ENCODE measurements at regions of chr3 and their contacts with region 1.

Region 1: GRCh38 chr3:9352917-9353752 is 9.7 kb upstream of the THUMPD3 start:
- DNase-seq: no peak
- H3K4me3 ChIP-seq: no peak overlapping the region
- H3K27ac ChIP-seq: peak overlapping the region in 1 of 4 donors; percentile 19
- H3K4me1 ChIP-seq: peaks cover 3 to 9% (median 7%) of the 10 kb centered on the region in 4 donors
- H3K27me3 ChIP-seq: no peaks in the 10 kb centered on the region
- CTCF ChIP-seq: peak; percentile 78 to 92 (median 81)
- EP300 ChIP-seq: no peak
- POLR2A ChIP-seq: no peak

Region 2: DNA sequence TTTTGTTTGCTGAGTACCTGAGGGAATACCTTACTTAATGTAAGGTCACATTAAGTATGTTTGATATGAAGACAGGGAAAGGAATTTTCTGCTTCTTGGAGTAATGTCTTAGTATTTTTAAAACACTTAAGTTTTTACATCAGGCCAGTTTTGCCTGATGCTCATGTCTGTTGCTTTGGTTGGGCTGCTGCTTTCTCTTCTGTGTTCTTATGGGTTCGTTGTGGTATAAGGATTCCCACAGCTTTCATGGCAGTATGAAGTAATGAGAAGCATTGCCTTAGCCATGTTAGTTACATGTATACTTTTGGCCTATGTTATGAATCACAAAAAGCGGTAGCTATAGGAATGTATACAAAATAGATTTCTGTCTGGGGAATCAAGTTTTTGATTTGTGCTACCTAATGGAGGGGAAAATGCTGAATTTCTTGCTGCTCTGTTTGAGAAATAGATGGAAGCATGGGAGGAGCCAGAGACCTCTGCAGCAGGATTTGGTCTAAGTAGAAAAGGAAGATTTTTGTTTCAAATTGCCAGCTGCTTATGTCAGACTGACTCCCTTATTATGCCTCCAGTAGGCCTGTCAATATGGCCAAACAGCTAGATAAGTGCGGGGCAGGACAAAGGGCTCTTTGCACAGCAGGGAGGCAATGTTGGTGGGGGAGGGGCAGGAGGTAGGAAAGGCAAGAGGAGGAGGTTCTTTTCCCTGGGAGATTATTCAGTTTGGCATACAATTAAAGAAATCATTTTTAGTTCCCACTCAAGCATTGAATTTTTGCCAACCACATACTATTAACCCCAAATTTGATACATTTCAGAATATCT is 49.5 kb after region 1 on chr3:
- intact Hi-C with region 1: no loop called
- DNase-seq: no peak
- H3K4me3 ChIP-seq: peak overlapping the region; percentile 3 to 13 (median 5)
- H3K27ac ChIP-seq: peak overlapping the region; percentile 98 to 100 (median 99)
- H3K4me1 ChIP-seq: peaks cover 78 to 89% (median 88%) of the 10 kb centered on the region in 4 donors
- H3K27me3 ChIP-seq: no peaks in the 10 kb centered on the region
- CTCF ChIP-seq: no peak
- EP300 ChIP-seq: no peak
- POLR2A ChIP-seq: no peak

Region 3: DNA sequence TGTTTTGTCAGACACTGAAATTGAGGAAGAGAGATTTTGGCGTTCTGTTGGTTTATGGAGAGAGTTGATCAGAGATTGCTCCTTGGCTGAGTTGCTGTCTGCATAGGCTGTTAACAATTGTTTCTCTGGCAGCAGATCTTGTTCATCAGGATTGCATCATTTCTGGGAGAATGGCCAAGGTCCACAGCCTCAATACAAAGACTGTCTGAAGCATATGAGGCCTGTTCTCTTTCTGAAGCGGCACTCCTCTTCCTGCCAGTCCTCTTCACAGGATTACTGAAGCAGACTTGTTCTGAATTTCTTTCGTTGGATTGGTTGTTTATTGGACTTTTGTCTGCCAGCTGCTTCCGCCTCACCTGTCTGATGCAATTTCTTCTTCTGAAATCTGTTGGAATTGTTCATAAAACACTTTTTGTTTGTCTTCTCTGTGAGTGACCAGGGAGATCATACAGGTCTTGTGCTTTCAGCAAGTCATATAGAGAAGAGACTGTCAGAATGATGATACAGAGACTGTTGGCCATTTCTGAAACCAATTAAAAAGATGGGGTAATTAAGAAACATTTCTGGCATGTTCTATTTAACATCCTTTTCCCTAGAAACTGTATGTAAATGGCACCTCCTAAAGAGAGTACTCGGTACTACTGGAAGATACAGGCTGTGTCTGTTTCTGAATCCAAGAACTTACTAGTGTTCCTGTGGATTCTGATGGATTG is 69.7 kb after region 1 on chr3:
- intact Hi-C with region 1: loop called (anchors 5 kb)
- DNase-seq: peak; percentile 93
- H3K4me3 ChIP-seq: peak overlapping the region in 3 of 4 donors; percentile 13 to 19 (median 15)
- H3K27ac ChIP-seq: peak overlapping the region; percentile 83 to 87 (median 84)
- H3K4me1 ChIP-seq: peaks cover 61 to 92% (median 84%) of the 10 kb centered on the region in 4 donors
- H3K27me3 ChIP-seq: no peaks in the 10 kb centered on the region
- CTCF ChIP-seq: peak; percentile 62 to 71 (median 65)
- EP300 ChIP-seq: no peak
- POLR2A ChIP-seq: no peak

Region 4: DNA sequence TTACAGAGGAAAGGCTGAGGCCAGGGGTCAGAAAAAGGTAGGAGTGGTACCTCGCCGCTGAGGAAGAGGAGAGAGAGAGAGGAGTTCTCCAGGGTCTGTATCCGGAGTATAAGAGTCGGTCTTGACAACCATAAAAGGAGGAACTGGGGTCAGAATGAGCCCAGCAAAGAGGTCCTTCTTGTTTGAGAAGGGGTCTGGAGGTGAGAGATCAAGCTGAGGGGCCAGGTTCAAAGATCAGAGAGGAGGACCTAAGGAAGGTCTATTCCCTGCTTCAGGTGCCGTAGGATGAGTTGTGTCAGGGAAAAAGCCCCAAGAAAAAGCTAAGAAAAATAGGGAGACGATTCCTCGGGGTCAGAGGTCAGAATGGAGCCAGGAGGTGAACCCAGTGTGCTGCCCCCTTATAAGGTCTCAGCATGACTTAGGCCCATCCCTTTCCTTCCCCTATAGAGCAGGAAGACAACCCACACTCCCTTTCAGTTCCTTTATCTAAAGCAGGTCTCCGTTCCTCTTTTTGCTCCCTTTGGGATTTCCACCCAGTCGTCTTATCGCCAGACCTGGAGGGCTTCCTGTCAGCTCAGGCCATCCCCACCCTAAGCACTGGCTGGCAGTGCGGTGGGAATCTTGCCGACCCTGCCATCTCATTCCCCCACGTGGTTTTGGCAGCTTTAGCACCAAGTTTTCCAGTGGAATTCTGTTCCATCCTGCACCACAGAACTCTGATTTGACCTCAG is 296.8 kb after region 1 on chr3:
- intact Hi-C with region 1: loop called (anchors 10 kb)
- DNase-seq: no peak
- H3K4me3 ChIP-seq: peak overlapping the region; percentile 71 to 100 (median 98)
- H3K27ac ChIP-seq: peak overlapping the region; percentile 79 to 88 (median 84)
- H3K4me1 ChIP-seq: peaks cover 15 to 49% (median 28%) of the 10 kb centered on the region in 4 donors
- H3K27me3 ChIP-seq: no peaks in the 10 kb centered on the region
- CTCF ChIP-seq: no peak
- EP300 ChIP-seq: no peak
- POLR2A ChIP-seq: no peak

Region 5: DNA sequence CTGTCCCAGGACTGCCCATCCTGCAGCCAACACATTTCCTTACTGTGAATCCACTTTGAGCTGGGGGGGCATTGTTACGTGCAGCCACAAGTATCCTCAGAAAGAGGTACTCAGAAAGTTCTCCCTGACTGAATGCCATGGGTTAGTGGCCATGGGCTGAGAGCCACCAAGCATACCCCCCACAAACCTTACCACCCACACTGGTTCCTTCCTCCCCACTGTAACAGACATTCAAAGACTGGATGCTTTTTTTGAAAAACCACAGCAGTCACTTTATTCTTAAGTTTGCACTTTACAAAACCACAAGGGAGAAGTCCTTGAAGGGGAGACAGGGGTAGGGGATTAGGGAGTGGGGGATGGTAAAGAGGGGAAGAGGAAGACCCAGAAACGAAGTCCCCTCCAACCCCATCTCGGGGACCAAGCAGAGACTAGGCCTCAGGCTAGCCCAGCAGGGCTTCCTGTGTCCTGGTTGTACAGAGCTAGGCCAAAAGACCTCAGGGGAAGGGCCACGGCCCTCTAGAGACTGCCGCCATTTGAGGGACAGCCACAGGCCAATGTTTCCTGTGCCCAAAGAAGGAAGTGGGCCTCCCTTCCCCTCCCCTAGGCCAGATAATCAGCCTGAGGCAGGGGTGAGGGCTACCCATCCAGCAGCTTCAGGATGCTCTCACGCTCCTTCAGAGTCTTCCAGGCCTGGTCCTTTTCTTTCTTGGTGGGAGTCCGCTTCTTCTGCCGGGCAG is 426.8 kb after region 1 on chr3:
- intact Hi-C with region 1: no loop called
- DNase-seq: no peak
- H3K4me3 ChIP-seq: no peak overlapping the region
- H3K27ac ChIP-seq: peak overlapping the region in 2 of 4 donors; percentile 29 to 53
- H3K4me1 ChIP-seq: peaks cover 3 to 26% (median 10%) of the 10 kb centered on the region in 4 donors
- H3K27me3 ChIP-seq: no peaks in the 10 kb centered on the region
- CTCF ChIP-seq: no peak
- EP300 ChIP-seq: no peak
- POLR2A ChIP-seq: no peak

Measured in esophagus muscularis mucosa (tissue), 4 donors.